AG04449 (cell line): ENCODE measurements at regions of chr6 and their contacts with region 1.

Region 1: DNA sequence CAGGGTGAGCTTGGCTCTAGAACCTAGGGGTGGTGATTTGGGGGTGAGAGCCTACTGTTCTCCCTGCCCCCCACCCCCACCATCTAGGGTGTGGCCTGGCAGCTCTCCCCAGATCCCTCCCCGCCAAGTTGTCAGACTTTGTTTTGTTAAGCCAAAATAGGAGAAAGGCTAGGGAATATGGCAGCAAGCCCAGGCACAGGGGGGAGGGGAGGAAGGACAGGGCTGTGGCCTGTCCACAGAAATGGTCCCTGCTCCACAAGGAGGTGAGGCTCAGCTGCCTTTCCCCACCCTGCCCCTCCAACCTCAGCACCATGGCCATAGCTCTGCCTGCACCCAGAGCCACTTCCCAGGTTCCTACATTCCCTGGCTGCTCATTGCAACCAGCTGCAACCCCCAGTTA is 17.2 kb downstream of the SCUBE3 start:
- DNase-seq: no peak
- H3K4me3 ChIP-seq: no peak overlapping the region
- CTCF ChIP-seq: no peak

Region 2: GRCh38 chr6:35213824-35214756 is 16.9 kb before region 1 on chr6 and contains the start of gene SCUBE3:
- CTCF ChIA-PET with region 1: interaction called, 14 read pairs
- POLR2A ChIA-PET with region 1: interaction called, 3 read pairs
- DNase-seq: no peak
- H3K4me3 ChIP-seq: peak within 1 kb of the TSS; percentile 72
- CTCF ChIP-seq: no peak

Region 3: GRCh38 chr6:35474131-35474940 is 243.4 kb after region 1 on chr6:
- CTCF ChIA-PET with region 1: no interaction called
- POLR2A ChIA-PET with region 1: no interaction called
- DNase-seq: no peak
- H3K4me3 ChIP-seq: no peak overlapping the region
- CTCF ChIP-seq: no peak